ENCODE measurements at regions of chr4 and their contacts with region 1.

Region 1: DNA sequence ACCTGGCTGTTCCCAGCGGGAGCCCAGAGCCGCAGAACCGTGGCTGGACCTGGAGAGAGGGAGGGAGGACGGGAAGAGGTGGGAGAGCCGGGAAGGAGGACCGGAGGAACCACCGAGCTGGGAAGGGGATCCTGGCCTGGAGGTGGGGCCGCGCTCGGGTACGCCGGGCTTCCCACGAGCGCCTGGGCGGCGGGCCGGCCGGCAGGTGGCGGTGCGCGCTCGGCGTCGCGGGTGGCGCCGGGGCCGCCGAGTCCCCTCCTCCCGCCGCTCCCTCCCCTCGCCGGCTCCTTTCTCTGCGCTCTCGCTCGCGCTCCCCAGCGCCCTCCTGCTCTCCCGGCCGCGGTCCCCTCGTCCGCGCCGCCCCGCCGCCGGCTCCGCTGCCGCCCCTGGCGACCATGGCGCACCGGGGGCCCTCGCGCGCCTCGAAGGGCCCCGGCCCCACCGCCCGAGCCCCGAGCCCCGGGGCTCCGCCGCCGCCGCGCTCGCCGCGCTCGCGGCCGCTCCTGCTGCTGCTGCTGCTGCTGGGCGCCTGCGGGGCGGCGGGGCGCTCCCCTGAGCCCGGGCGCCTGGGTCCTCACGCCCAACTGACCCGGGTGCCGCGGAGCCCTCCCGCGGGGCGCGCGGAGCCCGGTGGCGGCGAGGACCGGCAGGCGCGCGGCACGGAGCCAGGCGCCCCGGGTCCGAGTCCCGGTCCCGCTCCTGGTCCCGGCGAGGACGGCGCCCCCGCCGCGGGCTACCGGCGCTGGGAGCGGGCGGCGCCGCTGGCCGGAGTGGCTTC is at the start of gene SORCS2:
- H3K4me3 ChIP-seq: peak within 1 kb of the TSS; percentile 15
- H3K27ac ChIP-seq: no peak within 1 kb of the TSS; the same call in 1 of the 2 replicates
- H3K4me1 ChIP-seq: no peaks in the 10 kb centered on the region
- CTCF ChIP-seq: no peak

Region 2: GRCh38 chr4:7295911-7296660 is 103.6 kb after region 1 on chr4:
- CTCF ChIA-PET with region 1: interaction called, 17 read pairs
- POLR2A ChIA-PET with region 1: no interaction called
- H3K4me3 ChIP-seq: no peak overlapping the region
- H3K27ac ChIP-seq: no peak overlapping the region
- H3K4me1 ChIP-seq: no peaks in the 10 kb centered on the region
- CTCF ChIP-seq: no peak

Region 3: DNA sequence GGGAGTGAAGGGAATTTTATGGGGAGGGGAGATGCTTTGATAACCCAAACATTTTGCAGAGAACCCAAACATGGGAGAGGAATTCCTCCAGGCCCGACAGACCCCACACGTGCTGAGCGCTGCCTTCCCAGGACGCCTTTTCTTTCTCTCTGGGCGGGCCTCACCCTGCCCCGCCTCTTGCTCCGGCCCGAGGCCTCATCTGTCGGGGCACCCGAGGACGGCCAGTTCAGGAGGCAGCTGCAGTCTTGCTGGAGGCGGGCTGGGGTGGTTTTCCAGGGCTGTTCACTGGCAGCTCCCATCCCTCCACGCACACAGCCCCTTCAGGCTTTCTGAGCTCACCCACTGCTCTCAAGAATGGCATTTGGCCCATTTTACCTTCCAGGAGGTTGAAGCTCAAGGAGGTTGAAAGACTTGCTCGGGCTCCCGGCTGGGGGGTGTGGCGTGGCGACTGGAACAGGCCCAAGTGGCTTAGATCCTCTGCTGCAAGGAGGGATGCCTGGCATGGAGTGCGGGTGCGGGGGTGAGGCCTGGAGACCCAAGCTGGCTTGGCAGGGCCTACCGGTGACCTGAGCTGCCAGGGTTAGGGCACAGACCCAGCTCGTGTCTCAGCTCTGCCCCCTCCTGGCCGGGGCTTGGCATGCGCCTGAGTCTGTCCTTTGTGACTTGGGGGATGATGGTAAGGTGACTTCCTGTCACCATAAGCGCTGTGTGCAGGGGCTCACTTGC is 143.1 kb after region 1 on chr4:
- CTCF ChIA-PET with region 1: interaction called, 11 read pairs
- POLR2A ChIA-PET with region 1: interaction called, 4 read pairs
- H3K4me3 ChIP-seq: no peak overlapping the region
- H3K27ac ChIP-seq: no peak overlapping the region
- H3K4me1 ChIP-seq: no peaks in the 10 kb centered on the region
- CTCF ChIP-seq: peak; percentile 60

Measured in HEK293 (cell line).